Aorta (tissue), 5 donors: ENCODE measurements at regions of chr16 and their contacts with region 1.

Region 1: DNA sequence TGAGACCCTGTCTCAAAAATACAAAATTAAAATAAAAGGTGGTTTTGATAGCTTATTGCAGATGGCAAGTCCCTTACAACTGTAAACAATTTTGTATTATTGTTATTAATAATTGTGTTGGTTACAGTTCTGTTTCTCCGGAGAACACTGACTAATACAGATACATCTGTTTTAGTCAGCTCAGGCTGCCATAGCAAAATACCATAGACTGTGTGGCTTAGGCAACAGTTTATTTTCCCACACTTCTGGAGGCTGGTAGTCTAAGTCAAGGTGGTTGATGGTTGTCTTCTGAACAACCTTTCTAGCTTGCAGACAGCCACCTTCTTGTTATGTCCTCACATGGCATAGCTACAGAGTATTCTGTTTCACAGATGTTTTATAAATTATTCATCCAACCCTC is 14.2 kb upstream of the IL21R start:
- DNase-seq: no peak
- ATAC-seq: no peak
- H3K4me3 ChIP-seq: no peak overlapping the region
- H3K27ac ChIP-seq: no peak overlapping the region
- H3K4me1 ChIP-seq: no peaks in the 10 kb centered on the region
- H3K27me3 ChIP-seq: no peaks in the 10 kb centered on the region

Region 2: GRCh38 chr16:27169511-27170071 is 218.1 kb before region 1 on chr16:
- intact Hi-C with region 1: loop called in 1 of 2 experiments (anchors 5 kb)
- DNase-seq: peak in 1 of 2 donors; percentile 55
- ATAC-seq: peak; percentile 28
- H3K4me3 ChIP-seq: no peak overlapping the region
- H3K27ac ChIP-seq: no peak overlapping the region
- H3K4me1 ChIP-seq: no peaks in the 10 kb centered on the region
- H3K27me3 ChIP-seq: no peaks in the 10 kb centered on the region

Region 3: DNA sequence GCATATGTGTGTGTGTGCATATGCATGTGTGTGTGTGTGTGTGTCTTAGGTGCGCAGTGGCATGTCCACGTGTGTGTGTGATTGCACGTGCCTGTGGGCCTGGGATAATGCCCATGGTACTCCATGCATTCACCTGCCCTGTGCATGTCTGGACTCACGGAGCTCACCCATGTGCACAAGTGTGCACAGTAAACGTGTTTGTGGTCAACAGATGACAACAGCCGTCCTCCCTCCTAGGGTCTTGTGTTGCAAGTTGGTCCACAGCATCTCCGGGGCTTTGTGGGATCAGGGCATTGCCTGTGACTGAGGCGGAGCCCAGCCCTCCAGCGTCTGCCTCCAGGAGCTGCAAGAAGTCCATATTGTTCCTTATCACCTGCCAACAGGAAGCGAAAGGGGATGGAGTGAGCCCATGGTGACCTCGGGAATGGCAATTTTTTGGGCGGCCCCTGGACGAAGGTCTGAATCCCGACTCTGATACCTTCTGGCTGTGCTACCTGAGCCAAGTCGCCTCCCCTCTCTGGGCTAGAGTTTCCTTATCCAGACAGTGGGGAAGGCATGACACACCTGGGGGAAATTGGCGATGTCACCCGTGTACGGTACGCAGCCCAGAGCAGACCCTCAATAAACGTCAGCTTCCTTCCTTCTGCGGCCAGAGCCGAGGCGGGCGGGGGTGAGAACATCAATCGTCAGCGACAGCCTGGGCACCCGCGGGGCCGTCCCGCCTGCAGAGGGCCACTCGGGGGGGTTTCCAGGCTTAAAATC is 61.9 kb after region 1 on chr16:
- intact Hi-C with region 1: loop called in 1 of 2 experiments (anchors 10 kb)
- DNase-seq: no peak
- ATAC-seq: no peak
- H3K4me3 ChIP-seq: no peak overlapping the region
- H3K27ac ChIP-seq: no peak overlapping the region
- H3K4me1 ChIP-seq: no peaks in the 10 kb centered on the region
- H3K27me3 ChIP-seq: no peaks in the 10 kb centered on the region